ENCODE measurements at regions of chr22 and their contacts with region 1.

Region 1: GRCh38 chr22:41832553-41833368 is at the start of gene SREBF2:
- DNase-seq: peak; percentile 99
- H3K4me3 Mint-ChIP-seq: peak within 1 kb of the TSS; percentile 99
- H3K27ac Mint-ChIP-seq: peak within 1 kb of the TSS; percentile 99
- H3K4me1 Mint-ChIP-seq: peaks cover 51% of the 10 kb centered on the region
- H3K27me3 Mint-ChIP-seq: peaks cover 2% of the 10 kb centered on the region
- total RNA-seq, gene SREBF2: 209 and 218 TPM in 2 replicates

Region 2: GRCh38 chr22:41732096-41732772 is 100.5 kb before region 1 on chr22:
- intact Hi-C with region 1: no loop called
- DNase-seq: no peak
- H3K4me3 Mint-ChIP-seq: no peak overlapping the region
- H3K27ac Mint-ChIP-seq: no peak overlapping the region
- H3K4me1 Mint-ChIP-seq: no peaks in the 10 kb centered on the region
- H3K27me3 Mint-ChIP-seq: peaks cover 10% of the 10 kb centered on the region

Region 3: GRCh38 chr22:41780746-41781505 is 51.8 kb before region 1 on chr22:
- intact Hi-C with region 1: loop called (anchors 2 kb)
- DNase-seq: peak; percentile 97
- H3K4me3 Mint-ChIP-seq: peak overlapping the region; percentile 83
- H3K27ac Mint-ChIP-seq: peak overlapping the region; percentile 97
- H3K4me1 Mint-ChIP-seq: peaks cover 36% of the 10 kb centered on the region
- H3K27me3 Mint-ChIP-seq: no peaks in the 10 kb centered on the region

Region 4: GRCh38 chr22:41816181-41816621 is 16.6 kb before region 1 on chr22:
- intact Hi-C with region 1: no loop called
- DNase-seq: no peak
- H3K4me3 Mint-ChIP-seq: no peak overlapping the region
- H3K27ac Mint-ChIP-seq: no peak overlapping the region
- H3K4me1 Mint-ChIP-seq: peaks cover 4% of the 10 kb centered on the region
- H3K27me3 Mint-ChIP-seq: no peaks in the 10 kb centered on the region

Region 5: GRCh38 chr22:41842996-41843970 is 10.5 kb after region 1 on chr22:
- intact Hi-C with region 1: loop called (anchors 1 kb)
- DNase-seq: no peak
- H3K4me3 Mint-ChIP-seq: peak overlapping the region; percentile 33
- H3K27ac Mint-ChIP-seq: peak overlapping the region; percentile 87
- H3K4me1 Mint-ChIP-seq: peaks cover 73% of the 10 kb centered on the region
- H3K27me3 Mint-ChIP-seq: no peaks in the 10 kb centered on the region

Region 6: DNA sequence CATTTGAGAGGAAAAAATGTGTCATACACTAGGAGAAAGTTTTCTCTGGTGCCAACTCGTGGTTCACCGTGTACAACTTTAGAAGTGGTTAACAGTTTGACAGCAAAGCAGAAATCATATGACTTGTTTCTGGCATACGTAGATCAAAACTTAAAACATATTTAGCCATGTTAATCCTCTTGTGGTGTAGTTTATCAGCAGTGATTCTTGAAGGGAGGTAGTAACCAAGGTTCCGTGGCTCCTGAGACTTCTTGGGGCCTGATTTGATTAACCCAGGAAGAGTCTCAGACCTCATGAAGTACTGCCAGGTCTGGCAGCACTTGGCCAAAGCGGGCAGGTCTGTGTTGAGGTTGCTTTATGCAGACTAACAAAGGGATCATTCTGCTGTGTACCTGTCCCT is 40.6 kb after region 1 on chr22:
- intact Hi-C with region 1: loop called (anchors 5 kb)
- DNase-seq: peak; percentile 71
- H3K4me3 Mint-ChIP-seq: peak overlapping the region; percentile 75
- H3K27ac Mint-ChIP-seq: peak overlapping the region; percentile 96
- H3K4me1 Mint-ChIP-seq: peaks cover 42% of the 10 kb centered on the region
- H3K27me3 Mint-ChIP-seq: no peaks in the 10 kb centered on the region

Region 7: GRCh38 chr22:42079319-42080251 is 246.8 kb after region 1 on chr22 and contains the start of gene SMDT1:
- intact Hi-C with region 1: loop called (anchors 10 kb)
- DNase-seq: peak; percentile 99
- H3K4me3 Mint-ChIP-seq: peak within 1 kb of the TSS; percentile 92
- H3K27ac Mint-ChIP-seq: peak within 1 kb of the TSS; percentile 93
- H3K4me1 Mint-ChIP-seq: peaks cover 28% of the 10 kb centered on the region
- H3K27me3 Mint-ChIP-seq: no peaks in the 10 kb centered on the region
- total RNA-seq, gene SMDT1: 54.4 and 58.7 TPM in 2 replicates

Region 8: GRCh38 chr22:42331014-42331413 is 498.3 kb after region 1 on chr22:
- intact Hi-C with region 1: no loop called
- DNase-seq: no peak
- H3K4me3 Mint-ChIP-seq: no peak overlapping the region
- H3K27ac Mint-ChIP-seq: no peak overlapping the region
- H3K4me1 Mint-ChIP-seq: peaks cover 17% of the 10 kb centered on the region
- H3K27me3 Mint-ChIP-seq: peaks cover 2% of the 10 kb centered on the region